Left cardiac atrium (tissue), 4 donors: ENCODE measurements at regions of chr2 and their contacts with region 1.

Region 1: DNA sequence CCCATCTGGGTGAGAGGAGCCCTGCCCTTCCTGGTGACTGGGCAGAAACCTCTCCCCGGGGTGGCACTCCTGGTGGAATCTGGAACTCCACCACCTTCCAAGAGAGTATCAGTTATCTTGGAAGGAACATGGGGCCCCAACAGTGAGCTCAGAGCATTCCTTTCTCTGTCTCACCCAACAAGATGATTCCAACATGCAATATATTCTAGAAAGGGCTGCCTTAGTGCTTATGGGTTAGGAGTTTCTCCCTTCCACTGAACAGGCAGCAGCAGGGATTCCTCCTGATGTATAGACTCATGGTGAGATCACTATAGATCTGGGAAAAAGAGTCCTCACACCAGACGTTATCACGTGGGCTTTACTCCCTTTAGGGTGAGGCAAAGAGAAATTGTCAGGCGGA is 147.1 kb downstream of the COL4A4 start:
- DNase-seq: no peak
- ATAC-seq: no peak

Region 2: DNA sequence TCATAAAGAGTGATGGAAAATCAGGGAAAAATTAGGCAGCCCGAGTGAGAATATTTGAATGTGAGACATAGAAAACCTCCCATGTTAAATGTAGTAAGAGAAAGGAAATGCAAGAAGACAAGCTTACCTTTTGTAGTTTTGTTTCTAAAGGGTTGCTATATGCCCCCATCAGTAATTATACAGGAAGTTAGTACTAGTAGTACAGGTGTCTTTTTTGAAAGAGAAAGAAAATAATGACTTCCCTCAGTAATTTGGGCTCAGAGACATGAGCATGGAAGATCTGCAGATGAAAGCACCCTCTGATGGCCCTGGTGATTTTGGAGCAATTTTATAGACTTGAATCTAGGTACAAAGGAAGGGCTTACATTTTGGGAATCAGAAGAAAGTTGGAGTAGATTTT is 100.2 kb before region 1 on chr2:
- intact Hi-C with region 1: loop called in 1 of 2 experiments (anchors 5 kb)
- DNase-seq: no peak
- ATAC-seq: no peak